ENCODE measurements at regions of chr17 and their contacts with region 1.

Region 1: GRCh38 chr17:5584383-5585286 is at the start of gene NLRP1:
- DNase-seq: peak; percentile 63
- H3K4me3 Mint-ChIP-seq: no peak within 1 kb of the TSS
- H3K27ac Mint-ChIP-seq: no peak within 1 kb of the TSS
- H3K4me1 Mint-ChIP-seq: peaks cover 7% of the 10 kb centered on the region
- H3K27me3 Mint-ChIP-seq: peaks cover 46% of the 10 kb centered on the region
- CTCF ChIP-seq: no peak
- total RNA-seq, gene NLRP1: 0.57 and 1.2 TPM in 2 replicates

Region 2: GRCh38 chr17:5706577-5707216 is 122.1 kb after region 1 on chr17:
- CTCF ChIA-PET with region 1: no interaction called
- intact Hi-C with region 1: loop called (anchors 2 kb)
- DNase-seq: peak; percentile 53
- H3K4me3 Mint-ChIP-seq: no peak overlapping the region
- H3K27ac Mint-ChIP-seq: no peak overlapping the region
- H3K4me1 Mint-ChIP-seq: no peaks in the 10 kb centered on the region
- H3K27me3 Mint-ChIP-seq: peaks cover 53% of the 10 kb centered on the region
- CTCF ChIP-seq: peak; percentile 58

Region 3: GRCh38 chr17:6187836-6188235 is 603.2 kb after region 1 on chr17:
- CTCF ChIA-PET with region 1: no interaction called
- intact Hi-C with region 1: no loop called
- DNase-seq: no peak
- H3K4me3 Mint-ChIP-seq: no peak overlapping the region
- H3K27ac Mint-ChIP-seq: no peak overlapping the region
- H3K4me1 Mint-ChIP-seq: no peaks in the 10 kb centered on the region
- H3K27me3 Mint-ChIP-seq: peaks cover 72% of the 10 kb centered on the region
- CTCF ChIP-seq: no peak

Region 4: DNA sequence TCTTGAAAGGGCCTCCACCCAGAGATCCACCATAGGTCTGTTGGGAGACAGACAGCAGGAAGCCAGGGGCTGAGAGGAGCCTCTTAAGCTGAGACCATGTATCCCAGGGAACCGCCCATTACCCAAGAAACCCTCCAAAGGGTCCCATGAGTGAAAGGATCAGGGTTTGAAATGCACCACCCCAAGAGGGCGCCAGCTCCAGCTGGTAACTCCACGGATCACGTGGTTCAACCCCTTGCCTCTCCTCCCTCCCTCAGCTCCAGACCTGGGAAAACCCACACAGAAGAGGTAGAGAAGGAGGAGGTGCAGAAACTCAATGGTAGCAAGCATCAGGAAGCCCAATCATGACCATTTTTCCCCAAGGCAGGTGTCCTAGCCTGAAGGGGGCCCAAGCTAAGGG is 701.6 kb after region 1 on chr17:
- CTCF ChIA-PET with region 1: no interaction called
- intact Hi-C with region 1: loop called (anchors 5 kb)
- DNase-seq: peak; percentile 14
- H3K4me3 Mint-ChIP-seq: no peak overlapping the region
- H3K27ac Mint-ChIP-seq: no peak overlapping the region
- H3K4me1 Mint-ChIP-seq: no peaks in the 10 kb centered on the region
- H3K27me3 Mint-ChIP-seq: peaks cover 53% of the 10 kb centered on the region
- CTCF ChIP-seq: no peak

Region 5: GRCh38 chr17:6421700-6422604 is 837.3 kb after region 1 on chr17:
- CTCF ChIA-PET with region 1: interaction called, 3 read pairs
- intact Hi-C with region 1: loop called (anchors 2 kb)
- DNase-seq: peak; percentile 77
- H3K4me3 Mint-ChIP-seq: no peak overlapping the region
- H3K27ac Mint-ChIP-seq: no peak overlapping the region
- H3K4me1 Mint-ChIP-seq: peaks cover 6% of the 10 kb centered on the region
- H3K27me3 Mint-ChIP-seq: peaks cover 59% of the 10 kb centered on the region
- CTCF ChIP-seq: peak; percentile 83

Region 6: DNA sequence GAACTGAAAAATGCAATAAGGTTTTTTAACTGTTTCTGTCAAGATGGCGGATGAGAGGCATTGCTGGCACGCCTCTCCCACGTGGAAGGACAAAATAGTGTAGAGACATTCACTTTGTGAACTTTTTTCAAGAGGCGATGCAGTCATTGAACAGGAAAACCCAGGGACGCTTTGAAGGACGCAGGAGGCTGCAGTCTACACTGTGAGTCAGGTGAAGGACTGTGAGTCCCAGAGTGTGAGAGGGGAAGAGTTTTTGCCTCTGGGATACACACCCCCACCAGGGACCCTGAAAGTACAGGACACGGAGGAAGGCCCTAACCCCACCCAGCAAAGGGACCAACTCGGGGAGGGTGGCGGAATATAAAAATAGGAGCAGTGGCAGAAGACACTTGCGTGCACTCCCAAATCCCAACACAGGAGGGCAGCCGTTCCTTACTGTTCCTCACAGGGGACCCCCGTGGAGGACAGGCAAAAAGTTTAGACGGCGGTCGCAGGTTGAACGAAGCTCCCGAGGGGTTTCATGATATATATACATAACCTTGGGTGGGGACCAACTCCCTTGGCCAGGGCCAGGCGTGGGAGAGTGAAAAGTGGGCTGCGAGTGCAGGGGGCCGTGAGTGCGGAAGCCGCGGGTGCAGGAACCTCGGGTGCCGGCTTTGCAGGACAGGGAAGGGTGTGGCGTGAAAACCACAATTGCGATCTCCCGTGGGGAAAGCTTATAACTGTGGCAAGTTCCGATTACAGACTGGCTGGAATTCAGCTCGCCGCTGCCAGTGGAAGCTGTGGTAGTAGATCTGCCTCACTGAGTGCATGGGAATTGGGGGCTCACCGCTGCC is 1329.2 kb after region 1 on chr17:
- CTCF ChIA-PET with region 1: no interaction called
- intact Hi-C with region 1: loop called (anchors 10 kb)
- DNase-seq: peak; percentile 61
- H3K4me3 Mint-ChIP-seq: peak overlapping the region; percentile 13
- H3K27ac Mint-ChIP-seq: no peak overlapping the region
- H3K4me1 Mint-ChIP-seq: peaks cover 13% of the 10 kb centered on the region
- H3K27me3 Mint-ChIP-seq: peaks cover 47% of the 10 kb centered on the region
- CTCF ChIP-seq: peak; percentile 75